Spleen (tissue), 13 donors: ENCODE measurements at regions of chr20 and their contacts with region 1.

Region 1: GRCh38 chr20:23937303-23938117 is 51.1 kb downstream of the GGTLC1 start:
- DNase-seq: peak; percentile 77
- H3K4me3 ChIP-seq: no peak overlapping the region
- H3K27ac ChIP-seq: no peak overlapping the region
- H3K4me1 ChIP-seq: no peaks in the 10 kb centered on the region
- H3K27me3 ChIP-seq: peaks cover 0 to 16% (median 0%) of the 10 kb centered on the region in 7 donors
- CTCF ChIP-seq: peak; percentile 53 to 85 (median 75)
- POLR2A ChIP-seq: no peak

Region 2: GRCh38 chr20:23727016-23727415 is 210.5 kb before region 1 on chr20:
- intact Hi-C with region 1: no loop called
- DNase-seq: no peak
- H3K4me3 ChIP-seq: no peak overlapping the region
- H3K27ac ChIP-seq: no peak overlapping the region
- H3K4me1 ChIP-seq: no peaks in the 10 kb centered on the region
- H3K27me3 ChIP-seq: peaks cover 0 to 8% (median 0%) of the 10 kb centered on the region in 7 donors
- CTCF ChIP-seq: no peak
- POLR2A ChIP-seq: no peak

Region 3: DNA sequence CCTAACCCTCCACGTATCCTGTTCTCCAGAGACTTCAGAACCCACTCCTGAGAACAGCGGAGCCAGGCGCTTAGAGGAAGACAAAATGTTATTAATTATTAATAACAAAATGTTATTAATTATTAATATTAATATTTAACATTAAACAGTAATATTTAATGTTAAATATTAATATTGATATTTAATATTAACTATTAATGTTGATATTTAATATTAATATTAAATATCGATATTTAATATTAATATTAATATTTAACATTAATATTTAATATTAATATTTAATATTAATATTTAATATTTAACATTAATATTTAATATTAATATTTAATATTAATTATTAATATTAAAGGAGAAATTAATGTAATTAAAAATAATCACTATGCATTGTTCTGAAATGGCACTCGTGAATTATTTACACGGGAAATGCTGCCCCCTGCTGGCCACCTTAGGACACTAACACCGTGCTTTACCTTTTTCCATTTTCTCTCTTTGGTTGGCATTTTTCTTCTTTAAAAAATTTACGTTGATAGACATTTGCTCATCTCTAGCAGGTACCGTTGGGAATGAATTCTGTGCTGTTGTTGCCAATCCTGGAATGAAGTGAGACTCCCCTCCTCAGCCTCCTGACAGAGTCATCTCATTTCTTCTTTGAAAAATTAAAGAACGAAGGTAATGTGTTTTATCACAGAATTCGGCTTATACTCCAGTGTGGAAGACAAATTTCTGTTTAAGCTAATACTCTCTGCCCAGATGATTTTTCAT is 58.6 kb after region 1 on chr20:
- intact Hi-C with region 1: loop called (anchors 10 kb)
- DNase-seq: no peak
- H3K4me3 ChIP-seq: no peak overlapping the region
- H3K27ac ChIP-seq: no peak overlapping the region
- H3K4me1 ChIP-seq: no peaks in the 10 kb centered on the region
- H3K27me3 ChIP-seq: peaks cover 0 to 27% (median 0%) of the 10 kb centered on the region in 7 donors
- CTCF ChIP-seq: peak; percentile 48 to 84 (median 75)
- POLR2A ChIP-seq: no peak

Region 4: GRCh38 chr20:24098886-24099285 is 161.4 kb after region 1 on chr20:
- intact Hi-C with region 1: loop called (anchors 5 kb)
- DNase-seq: no peak
- H3K4me3 ChIP-seq: no peak overlapping the region
- H3K27ac ChIP-seq: no peak overlapping the region
- H3K4me1 ChIP-seq: no peaks in the 10 kb centered on the region
- H3K27me3 ChIP-seq: no peaks in the 10 kb centered on the region
- CTCF ChIP-seq: no peak
- POLR2A ChIP-seq: no peak